Activated T-helper 2 cell treated with anti-CD3 and anti-CD28 coated beads, Interferon-gamma antibody, Interleukin-2, Interleukin-4, amounts not matched to agents 10 μg/mL and 5 μg/mL and 100 μg/mL, durations not matched to agents 14 hours and 24 hours and 36 hours (primary cell): ENCODE measurements at regions of chr15 and their contacts with region 1.

Region 1: GRCh38 chr15:57527382-57528091 is 64.2 kb upstream of the MYZAP start:
- DNase-seq: no peak
- H3K4me3 Mint-ChIP-seq: no peak overlapping the region
- H3K27ac Mint-ChIP-seq: no peak overlapping the region
- H3K4me1 Mint-ChIP-seq: no peaks in the 10 kb centered on the region
- H3K27me3 Mint-ChIP-seq: peaks cover 19% of the 10 kb centered on the region

Region 2: DNA sequence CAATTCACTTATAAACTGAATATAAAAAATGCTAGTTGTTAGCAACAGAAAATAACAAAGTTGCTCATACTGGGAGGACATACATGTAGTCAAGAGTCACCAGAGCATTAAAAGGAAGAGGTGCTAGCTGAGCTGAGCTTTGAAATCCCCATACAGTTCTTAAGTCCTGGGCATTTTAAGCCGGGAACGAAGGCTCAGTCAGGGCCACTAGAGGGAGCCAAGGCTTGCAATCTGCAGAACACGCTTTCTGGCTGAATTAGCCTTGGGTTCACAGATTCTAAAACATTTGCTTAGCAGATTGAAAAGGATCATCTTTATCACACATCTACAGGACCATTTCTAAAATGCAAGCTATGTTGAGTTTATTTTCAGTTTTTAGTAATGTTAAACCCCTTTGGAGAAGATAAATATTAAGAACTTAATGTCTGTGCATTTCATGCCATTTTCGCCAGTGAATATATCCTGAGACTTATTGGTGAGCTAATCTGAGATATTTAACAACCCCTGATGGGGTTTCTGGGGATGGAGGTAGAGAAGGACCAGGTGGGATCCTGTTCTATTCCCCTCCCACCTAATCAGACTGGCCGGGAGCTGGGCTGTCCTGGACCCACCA is 1036.3 kb before region 1 on chr15:
- intact Hi-C with region 1: loop called (anchors 10 kb)
- DNase-seq: peak; percentile 33
- H3K4me3 Mint-ChIP-seq: no peak overlapping the region
- H3K27ac Mint-ChIP-seq: no peak overlapping the region
- H3K4me1 Mint-ChIP-seq: peaks cover 6% of the 10 kb centered on the region
- H3K27me3 Mint-ChIP-seq: peaks cover 11% of the 10 kb centered on the region

Region 3: DNA sequence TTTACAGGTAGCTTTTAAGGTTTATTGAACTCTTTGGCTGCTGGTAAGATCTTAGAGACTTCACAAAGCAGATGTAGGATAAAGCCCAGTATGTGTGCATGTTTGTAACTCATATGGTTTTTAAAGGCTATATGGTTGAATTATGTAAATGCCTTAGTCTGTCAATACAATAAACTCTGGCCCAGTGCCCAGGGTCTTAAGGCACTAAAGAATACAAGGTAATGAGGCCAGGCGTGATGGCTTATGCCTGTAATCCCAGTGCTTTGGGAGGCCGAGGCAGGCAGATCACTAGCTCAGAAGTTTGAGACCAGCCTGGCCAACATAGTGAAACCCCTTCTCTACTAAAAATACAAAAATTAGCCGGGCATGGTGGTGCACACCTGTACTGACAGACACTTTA is 321.5 kb before region 1 on chr15:
- intact Hi-C with region 1: no loop called
- DNase-seq: no peak
- H3K4me3 Mint-ChIP-seq: no peak overlapping the region
- H3K27ac Mint-ChIP-seq: no peak overlapping the region
- H3K4me1 Mint-ChIP-seq: peaks cover 10% of the 10 kb centered on the region
- H3K27me3 Mint-ChIP-seq: no peaks in the 10 kb centered on the region

Region 4: GRCh38 chr15:57340682-57341259 is 186.8 kb before region 1 on chr15:
- intact Hi-C with region 1: loop called (anchors 1 kb)
- DNase-seq: no peak
- H3K4me3 Mint-ChIP-seq: no peak overlapping the region
- H3K27ac Mint-ChIP-seq: no peak overlapping the region
- H3K4me1 Mint-ChIP-seq: no peaks in the 10 kb centered on the region
- H3K27me3 Mint-ChIP-seq: peaks cover 5% of the 10 kb centered on the region